OCI-LY7 (cell line): ENCODE measurements at regions of chr10 and their contacts with region 1.

Region 1: GRCh38 chr10:58268870-58269605 is at the start of gene CISD1:
- DNase-seq: peak; percentile 98
- H3K4me3 ChIP-seq: peak within 1 kb of the TSS; percentile 90
- H3K27ac ChIP-seq: peak within 1 kb of the TSS; percentile 82
- H3K4me1 ChIP-seq: peaks cover 24% of the 10 kb centered on the region
- CTCF ChIP-seq: no peak
- total RNA-seq, gene CISD1: 22.4 and 24.1 TPM in 2 replicates

Region 2: DNA sequence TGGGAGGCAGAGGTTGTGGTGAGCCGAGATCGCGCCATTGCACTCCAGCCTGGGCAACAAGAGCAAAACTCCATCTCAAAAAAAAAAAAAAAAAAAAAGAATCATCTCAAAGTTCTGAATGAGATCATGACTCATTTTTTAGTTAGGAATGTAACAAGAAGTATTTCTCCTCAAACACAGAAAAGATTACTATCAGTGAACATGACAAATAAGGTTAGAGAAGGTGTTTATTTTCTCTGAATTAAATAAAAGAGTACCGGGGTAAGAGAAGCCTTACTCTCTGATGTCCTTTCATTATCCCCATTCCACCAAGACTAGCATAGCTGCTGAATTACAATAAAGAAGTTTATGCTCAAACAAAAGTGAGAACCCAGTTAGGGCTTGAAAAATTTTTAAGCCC is 51.4 kb before region 1 on chr10:
- CTCF ChIA-PET with region 1: no interaction called
- POLR2A ChIA-PET with region 1: no interaction called
- intact Hi-C with region 1: no loop called
- DNase-seq: no peak
- H3K4me3 ChIP-seq: no peak overlapping the region
- H3K27ac ChIP-seq: no peak overlapping the region
- H3K4me1 ChIP-seq: no peaks in the 10 kb centered on the region
- CTCF ChIP-seq: no peak

Region 3: GRCh38 chr10:58280982-58281752 is 12.1 kb after region 1 on chr10:
- CTCF ChIA-PET with region 1: interaction called, 3 read pairs
- POLR2A ChIA-PET with region 1: interaction called, 11 read pairs
- intact Hi-C with region 1: no loop called
- DNase-seq: no peak
- H3K4me3 ChIP-seq: no peak overlapping the region
- H3K27ac ChIP-seq: no peak overlapping the region
- H3K4me1 ChIP-seq: peaks cover 13% of the 10 kb centered on the region
- CTCF ChIP-seq: no peak

Region 4: DNA sequence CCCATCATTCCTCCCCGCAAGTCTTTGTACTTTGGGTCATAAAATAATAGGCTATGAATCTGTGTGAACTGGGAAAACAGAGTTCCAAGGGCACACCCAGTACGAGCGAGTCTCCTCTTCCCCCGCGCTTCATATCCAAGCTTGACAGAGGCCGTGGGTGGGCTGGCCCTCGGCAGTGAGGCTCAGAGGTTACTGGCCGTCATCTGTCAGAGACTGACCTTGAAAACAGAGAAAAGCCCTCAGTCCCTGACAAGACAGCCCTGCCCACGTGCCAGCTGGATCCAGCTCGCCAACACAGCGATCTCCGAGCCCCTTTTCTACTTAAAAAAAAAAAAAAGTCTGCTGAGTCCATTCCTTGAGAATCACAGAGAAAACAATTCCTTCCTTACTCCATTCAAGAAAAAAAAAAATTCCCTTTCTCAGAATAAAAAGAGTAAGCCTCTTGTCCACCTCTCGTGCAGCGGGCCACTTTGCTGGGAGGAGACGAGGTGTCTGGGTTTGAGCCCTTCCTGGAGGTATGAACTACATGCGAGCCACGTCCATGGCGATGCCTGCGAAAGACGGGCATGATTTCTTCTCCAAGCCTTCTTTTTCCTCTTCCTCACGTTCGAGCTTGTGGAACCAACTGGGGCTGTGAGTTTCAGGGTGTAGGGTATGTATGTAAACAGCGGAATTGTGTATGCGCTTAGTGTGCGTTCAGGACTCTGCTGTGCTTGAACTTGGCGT is 242.9 kb after region 1 on chr10:
- CTCF ChIA-PET with region 1: no interaction called
- POLR2A ChIA-PET with region 1: no interaction called
- intact Hi-C with region 1: no loop called
- DNase-seq: no peak
- H3K4me3 ChIP-seq: no peak overlapping the region
- H3K27ac ChIP-seq: no peak overlapping the region
- H3K4me1 ChIP-seq: no peaks in the 10 kb centered on the region
- CTCF ChIP-seq: no peak